Gastrocnemius medialis (tissue), 4 donors: ENCODE measurements at regions of chr4 and their contacts with region 1.

Region 1: GRCh38 chr4:53015681-53016080 is 153.6 kb downstream of the RASL11B start:
- DNase-seq: no peak
- ATAC-seq: no peak
- H3K4me3 ChIP-seq: no peak overlapping the region
- H3K27ac ChIP-seq: peak overlapping the region in 2 of 4 donors; percentile 6 to 28
- H3K4me1 ChIP-seq: peaks cover 18 to 45% of the 10 kb centered on the region in 2 donors
- H3K27me3 ChIP-seq: no peaks in the 10 kb centered on the region
- CTCF ChIP-seq: peak in 4 of 5 experiments; percentile 47 to 66 (median 59)
- POLR2A ChIP-seq: no peak

Region 2: GRCh38 chr4:53128706-53129357 is 113.2 kb after region 1 on chr4:
- in situ Hi-C with region 1: no loop called
- intact Hi-C with region 1: loop called (anchors 5 kb)
- DNase-seq: no peak
- ATAC-seq: no peak
- H3K4me3 ChIP-seq: peak overlapping the region in 1 of 4 donors; percentile 8
- H3K27ac ChIP-seq: peak overlapping the region in 2 of 4 donors; percentile 23 to 33
- H3K4me1 ChIP-seq: peaks cover 25 to 38% of the 10 kb centered on the region in 2 donors
- H3K27me3 ChIP-seq: no peaks in the 10 kb centered on the region
- CTCF ChIP-seq: no peak
- POLR2A ChIP-seq: no peak

Region 3: DNA sequence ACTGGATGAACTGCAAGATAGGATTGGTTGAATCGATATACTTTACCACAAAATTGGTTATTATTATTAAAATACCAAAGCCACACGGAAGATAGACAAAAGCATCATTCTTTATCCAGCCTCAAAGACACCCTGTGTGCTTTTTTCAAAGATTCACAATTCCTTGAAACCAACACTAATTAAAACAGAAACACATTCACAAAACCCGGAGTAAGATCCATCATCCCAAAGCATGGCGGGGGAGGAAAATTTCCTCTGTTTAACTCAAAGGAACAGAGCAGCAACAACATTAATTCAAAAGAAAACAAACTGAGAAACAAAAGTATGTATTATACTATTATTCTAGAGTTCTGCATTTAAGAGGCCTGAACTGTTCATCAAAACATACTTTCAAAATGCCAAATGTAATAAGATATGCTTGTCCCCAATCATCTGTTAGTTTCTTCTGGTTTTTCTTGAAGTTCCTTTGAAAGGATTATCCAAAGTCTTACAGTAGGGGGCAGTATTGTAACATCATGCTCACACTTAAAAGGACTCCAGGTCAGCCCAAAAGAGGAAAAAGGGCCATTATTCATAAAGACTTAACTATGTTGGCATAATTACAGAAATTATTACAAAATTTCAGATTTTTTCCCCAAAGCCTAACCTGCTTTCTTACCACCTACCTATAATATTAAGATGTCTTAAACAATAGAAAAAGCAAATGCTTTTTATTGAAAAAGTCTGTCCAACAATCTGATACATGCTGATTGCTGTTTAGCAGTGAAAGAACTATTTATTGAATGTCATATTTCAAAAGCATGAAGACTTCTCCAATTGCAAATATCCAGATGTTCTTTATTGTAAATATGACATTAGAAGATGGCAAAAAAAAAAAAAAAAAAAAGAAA is 181.4 kb after region 1 on chr4:
- in situ Hi-C with region 1: loop called in 1 of 4 experiments (anchors 10 kb)
- intact Hi-C with region 1: loop called (anchors 10 kb)
- DNase-seq: no peak
- ATAC-seq: peak in 1 of 2 donors; percentile 55
- H3K4me3 ChIP-seq: no peak overlapping the region
- H3K27ac ChIP-seq: no peak overlapping the region
- H3K4me1 ChIP-seq: no peaks in the 10 kb centered on the region
- H3K27me3 ChIP-seq: no peaks in the 10 kb centered on the region
- CTCF ChIP-seq: peak; percentile 44 to 71 (median 60)
- POLR2A ChIP-seq: no peak

Region 4: DNA sequence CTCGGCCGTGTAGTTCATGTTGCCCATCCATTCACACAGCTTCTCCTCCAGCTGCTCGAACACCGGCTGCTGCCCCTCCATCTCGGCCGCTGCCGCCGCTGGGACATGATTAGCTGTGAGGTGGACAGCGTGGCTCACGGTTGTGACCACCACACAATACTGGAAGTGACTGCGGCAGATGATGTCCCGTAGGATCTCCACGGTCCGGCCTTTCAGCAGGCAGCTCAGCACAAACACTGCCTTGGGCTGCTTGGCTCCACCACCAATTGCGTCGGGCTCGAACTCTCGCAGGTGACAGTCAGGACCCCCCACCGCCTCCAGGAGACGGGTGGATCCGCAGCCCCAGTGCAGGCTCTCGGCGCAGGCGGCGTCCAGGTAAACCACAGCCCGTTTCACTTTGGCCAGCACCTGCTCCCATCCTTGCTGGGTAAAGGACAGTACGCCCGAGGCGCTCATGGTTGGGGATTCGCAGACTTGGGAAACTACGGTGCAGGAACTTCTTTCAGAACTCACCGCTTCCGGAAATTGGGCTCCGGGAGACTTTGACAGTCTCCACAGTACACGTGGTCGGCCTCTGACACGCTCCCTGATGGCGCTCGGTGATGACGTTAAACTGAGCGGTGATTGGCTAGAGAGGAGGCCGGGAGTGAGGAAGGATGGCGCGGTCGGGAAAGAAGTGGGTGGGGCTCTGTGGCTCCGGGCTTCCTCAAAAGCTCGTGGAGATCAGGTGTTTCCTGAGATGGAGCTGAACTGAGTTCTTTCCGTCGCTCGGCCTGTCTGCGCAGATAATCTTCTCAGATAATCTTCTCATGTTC is 350.0 kb after region 1 on chr4 and contains the start of gene SCFD2:
- in situ Hi-C with region 1: loop called in 1 of 4 experiments (anchors 25 kb)
- intact Hi-C with region 1: no loop called
- DNase-seq: peak; percentile 96
- ATAC-seq: peak; percentile 100
- H3K4me3 ChIP-seq: peak within 1 kb of the TSS; percentile 64 to 98 (median 88)
- H3K27ac ChIP-seq: peak within 1 kb of the TSS; percentile 56 to 78 (median 68)
- H3K4me1 ChIP-seq: peaks cover 16 to 23% of the 10 kb centered on the region in 2 donors
- H3K27me3 ChIP-seq: peaks cover 2 to 13% (median 5%) of the 10 kb centered on the region in 3 donors
- CTCF ChIP-seq: no peak
- POLR2A ChIP-seq: peak; percentile 22 to 51
- total RNA-seq, gene SCFD2: 8.9 to 16.0 (median 14.8) TPM

Region 5: GRCh38 chr4:53377319-53378170 is 361.9 kb after region 1 on chr4 and contains the start of gene FIP1L1:
- in situ Hi-C with region 1: loop called in 2 of 4 experiments (anchors 25 kb)
- intact Hi-C with region 1: no loop called
- DNase-seq: peak; percentile 84 to 94
- ATAC-seq: peak; percentile 96 to 97
- H3K4me3 ChIP-seq: peak within 1 kb of the TSS; percentile 84 to 93 (median 90)
- H3K27ac ChIP-seq: peak within 1 kb of the TSS; percentile 85 to 87 (median 85)
- H3K4me1 ChIP-seq: peaks cover 13% of the 10 kb centered on the region in 2 donors
- H3K27me3 ChIP-seq: peaks cover 0 to 4% (median 0%) of the 10 kb centered on the region in 3 donors
- CTCF ChIP-seq: no peak
- POLR2A ChIP-seq: peak; percentile 77 to 84
- total RNA-seq, gene FIP1L1: 26.7 to 36.6 (median 31.1) TPM

Region 6: GRCh38 chr4:53432528-53433424 is 417.1 kb after region 1 on chr4:
- in situ Hi-C with region 1: no loop called
- intact Hi-C with region 1: no loop called
- DNase-seq: no peak
- ATAC-seq: no peak
- H3K4me3 ChIP-seq: no peak overlapping the region
- H3K27ac ChIP-seq: no peak overlapping the region
- H3K4me1 ChIP-seq: no peaks in the 10 kb centered on the region
- H3K27me3 ChIP-seq: no peaks in the 10 kb centered on the region
- CTCF ChIP-seq: no peak
- POLR2A ChIP-seq: no peak

Region 7: GRCh38 chr4:53688186-53688790 is 672.6 kb after region 1 on chr4:
- in situ Hi-C with region 1: loop called in 1 of 4 experiments (anchors 25 kb)
- intact Hi-C with region 1: no loop called
- DNase-seq: no peak
- ATAC-seq: no peak
- H3K4me3 ChIP-seq: no peak overlapping the region
- H3K27ac ChIP-seq: no peak overlapping the region
- H3K4me1 ChIP-seq: no peaks in the 10 kb centered on the region
- H3K27me3 ChIP-seq: no peaks in the 10 kb centered on the region
- CTCF ChIP-seq: no peak
- POLR2A ChIP-seq: no peak

Region 8: DNA sequence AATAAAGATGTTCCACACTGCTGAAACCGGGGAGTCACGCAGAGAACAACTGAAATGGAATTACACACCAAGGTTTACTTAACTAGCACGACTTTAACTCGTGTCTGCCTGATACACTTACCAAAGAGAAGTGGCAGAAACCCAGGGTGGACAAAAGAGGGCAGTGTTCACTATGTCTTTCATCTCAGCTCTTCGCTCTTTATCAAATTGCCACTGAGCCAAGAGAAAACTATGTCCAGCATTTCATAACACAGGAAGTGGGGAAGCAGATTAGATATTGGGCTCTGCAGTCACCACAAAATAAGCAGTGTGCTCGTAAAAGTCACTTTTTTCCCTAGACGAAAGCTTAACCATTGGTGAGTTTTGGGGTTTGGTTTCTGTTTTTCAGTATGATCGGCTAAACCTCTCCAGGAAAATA is 893.0 kb after region 1 on chr4:
- in situ Hi-C with region 1: loop called in 1 of 4 experiments (anchors 25 kb)
- intact Hi-C with region 1: no loop called
- DNase-seq: peak; percentile 10 to 25
- ATAC-seq: peak; percentile 86 to 96
- H3K4me3 ChIP-seq: peak overlapping the region in 1 of 4 donors; percentile 22
- H3K27ac ChIP-seq: peak overlapping the region in 1 of 4 donors; percentile 14
- H3K4me1 ChIP-seq: peaks cover 16% of the 10 kb centered on the region in 2 donors
- H3K27me3 ChIP-seq: no peaks in the 10 kb centered on the region
- CTCF ChIP-seq: peak; percentile 20 to 64 (median 53)
- POLR2A ChIP-seq: no peak